ENCODE measurements at regions of chr12 and their contacts with region 1.

Region 1: GRCh38 chr12:123043536-123044001 is 63.1 kb downstream of the ARL6IP4 start:
- DNase-seq: peak; percentile 73
- H3K4me3 Mint-ChIP-seq: no peak overlapping the region
- H3K27ac Mint-ChIP-seq: no peak overlapping the region
- H3K4me1 Mint-ChIP-seq: no peaks in the 10 kb centered on the region
- H3K27me3 Mint-ChIP-seq: no peaks in the 10 kb centered on the region
- CTCF ChIP-seq: peak; percentile 60

Region 2: DNA sequence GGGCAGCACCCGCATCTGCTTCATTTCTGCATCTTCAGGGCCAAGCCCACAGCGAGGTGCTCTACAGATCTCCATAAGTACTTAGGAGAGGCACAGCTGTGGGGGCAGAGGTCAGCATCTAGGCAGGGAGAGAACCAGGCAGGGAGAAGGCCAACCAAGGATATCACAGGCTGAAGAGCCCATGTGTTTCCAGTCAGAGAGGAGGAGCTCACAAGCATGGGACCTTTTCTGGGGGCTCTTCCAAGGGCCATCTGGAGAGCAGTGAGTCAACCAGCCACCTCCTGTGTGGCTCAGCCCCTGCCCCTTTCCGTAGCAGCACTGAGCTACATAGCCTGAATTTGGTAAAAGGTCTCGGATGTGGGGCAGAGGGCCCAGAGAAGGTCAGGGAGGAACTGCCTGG is 15.4 kb after region 1 on chr12:
- CTCF ChIA-PET with region 1: interaction called, 10 read pairs
- POLR2A ChIA-PET with region 1: interaction called, 3 read pairs
- intact Hi-C with region 1: no loop called
- DNase-seq: no peak
- H3K4me3 Mint-ChIP-seq: no peak overlapping the region
- H3K27ac Mint-ChIP-seq: no peak overlapping the region
- H3K4me1 Mint-ChIP-seq: peaks cover 12% of the 10 kb centered on the region
- H3K27me3 Mint-ChIP-seq: no peaks in the 10 kb centered on the region
- CTCF ChIP-seq: no peak

Region 3: DNA sequence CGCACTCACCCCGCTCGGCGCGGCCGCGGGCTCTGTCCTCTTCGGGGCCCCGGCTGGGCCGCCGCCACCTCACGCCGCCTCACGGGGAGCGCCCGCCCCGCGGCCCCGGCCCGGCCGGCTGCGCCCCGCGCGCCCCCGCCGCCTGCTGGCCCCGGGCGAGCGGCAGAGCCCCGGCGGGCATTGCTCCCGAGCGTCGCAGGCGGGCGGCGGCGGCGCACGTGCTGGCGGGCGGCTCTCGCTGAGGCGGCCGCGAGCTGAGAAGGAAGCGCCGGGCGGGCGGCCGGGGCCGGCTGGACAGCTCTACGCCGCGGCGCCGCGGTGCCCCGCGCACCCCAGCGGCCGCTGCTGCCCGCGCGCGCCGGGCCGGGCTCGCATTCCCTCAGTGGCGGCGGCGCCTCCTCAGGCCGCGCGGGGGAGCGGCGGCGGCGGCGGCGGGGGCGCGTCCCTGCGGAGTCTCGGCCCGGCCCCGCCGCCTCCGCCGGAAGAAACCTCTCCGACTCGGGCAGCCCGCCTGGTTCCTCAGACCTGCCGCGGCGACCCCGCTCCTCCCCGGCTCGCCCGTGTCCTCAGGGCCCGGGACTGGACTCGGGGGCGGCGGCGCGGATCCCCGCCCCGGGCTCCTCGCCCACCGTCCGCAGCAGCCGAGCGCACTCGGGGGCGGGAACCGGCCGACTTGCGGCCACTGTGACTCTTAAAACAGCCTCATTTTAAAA is 107.3 kb after region 1 on chr12 and contains the start of gene PITPNM2:
- CTCF ChIA-PET with region 1: interaction called, 10 read pairs
- POLR2A ChIA-PET with region 1: no interaction called
- intact Hi-C with region 1: loop called (anchors 1 kb)
- DNase-seq: peak; percentile 56
- H3K4me3 Mint-ChIP-seq: peak within 1 kb of the TSS; percentile 57
- H3K27ac Mint-ChIP-seq: peak within 1 kb of the TSS; percentile 14
- H3K4me1 Mint-ChIP-seq: no peaks in the 10 kb centered on the region
- H3K27me3 Mint-ChIP-seq: no peaks in the 10 kb centered on the region
- CTCF ChIP-seq: no peak
- total RNA-seq, gene PITPNM2: 7.2 and 10.5 TPM in 2 replicates

Measured in MCF 10A (cell line).